Natural killer cell (primary cell): ENCODE measurements at regions of chr2 and their contacts with region 1.

Region 1: GRCh38 chr2:41782306-41783158 is 265.3 kb upstream of the PKDCC start:
- DNase-seq: peak in 1 of 2 donors; percentile 60
- ATAC-seq: peak in 2 of 3 donors; percentile 53 to 69
- H3K4me3 ChIP-seq: no peak overlapping the region
- H3K4me3 Mint-ChIP-seq: no peak overlapping the region
- H3K27ac ChIP-seq: no peak overlapping the region
- H3K27ac Mint-ChIP-seq: no peak overlapping the region
- H3K4me1 ChIP-seq: no peaks in the 10 kb centered on the region
- H3K4me1 Mint-ChIP-seq: no peaks in the 10 kb centered on the region
- H3K27me3 ChIP-seq: no peaks in the 10 kb centered on the region
- H3K27me3 Mint-ChIP-seq: peaks cover 3 to 14% of the 10 kb centered on the region in 2 donors
- CTCF ChIP-seq: peak; percentile 87

Region 2: GRCh38 chr2:39837856-39838453 is 1944.6 kb before region 1 on chr2:
- intact Hi-C with region 1: loop called (anchors 2 kb)
- DNase-seq: peak in 1 of 2 donors; percentile 34
- ATAC-seq: peak in 2 of 3 donors; percentile 34 to 50
- H3K4me3 ChIP-seq: no peak overlapping the region
- H3K4me3 Mint-ChIP-seq: no peak overlapping the region
- H3K27ac ChIP-seq: no peak overlapping the region
- H3K27ac Mint-ChIP-seq: no peak overlapping the region
- H3K4me1 ChIP-seq: peaks cover 12% of the 10 kb centered on the region
- H3K4me1 Mint-ChIP-seq: peaks cover 0 to 6% of the 10 kb centered on the region in 2 donors
- H3K27me3 ChIP-seq: no peaks in the 10 kb centered on the region
- H3K27me3 Mint-ChIP-seq: no peaks in the 10 kb centered on the region
- CTCF ChIP-seq: peak; percentile 31

Region 3: DNA sequence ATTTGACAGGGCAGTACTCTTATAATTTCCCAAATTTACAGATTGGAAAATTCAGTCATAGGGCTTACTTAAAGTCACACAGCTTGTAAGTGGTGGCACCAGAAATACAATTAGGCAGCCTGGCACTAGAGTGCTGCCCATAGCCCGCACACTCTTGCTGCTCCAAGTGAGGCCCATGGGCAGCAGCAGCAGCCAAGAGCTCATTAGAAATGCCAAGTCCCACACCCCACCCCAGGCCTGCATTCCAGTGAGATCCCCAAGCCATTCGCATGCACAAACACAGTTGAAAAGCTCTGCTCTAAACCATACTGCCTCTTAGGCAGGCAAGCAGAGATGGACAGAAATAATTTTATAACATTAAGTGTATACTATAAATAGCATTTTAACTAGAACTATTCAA is 114.0 kb before region 1 on chr2:
- intact Hi-C with region 1: no loop called
- DNase-seq: no peak
- ATAC-seq: no peak
- H3K4me3 ChIP-seq: no peak overlapping the region
- H3K4me3 Mint-ChIP-seq: no peak overlapping the region
- H3K27ac ChIP-seq: no peak overlapping the region
- H3K27ac Mint-ChIP-seq: no peak overlapping the region
- H3K4me1 ChIP-seq: no peaks in the 10 kb centered on the region
- H3K4me1 Mint-ChIP-seq: peaks cover 0 to 5% of the 10 kb centered on the region in 2 donors
- H3K27me3 ChIP-seq: no peaks in the 10 kb centered on the region
- H3K27me3 Mint-ChIP-seq: peaks cover 0 to 9% of the 10 kb centered on the region in 2 donors
- CTCF ChIP-seq: no peak

Region 4: GRCh38 chr2:41764930-41765329 is 17.6 kb before region 1 on chr2:
- intact Hi-C with region 1: no loop called
- DNase-seq: no peak
- ATAC-seq: no peak
- H3K4me3 ChIP-seq: no peak overlapping the region
- H3K4me3 Mint-ChIP-seq: no peak overlapping the region
- H3K27ac ChIP-seq: no peak overlapping the region
- H3K27ac Mint-ChIP-seq: no peak overlapping the region
- H3K4me1 ChIP-seq: no peaks in the 10 kb centered on the region
- H3K4me1 Mint-ChIP-seq: no peaks in the 10 kb centered on the region
- H3K27me3 ChIP-seq: no peaks in the 10 kb centered on the region
- H3K27me3 Mint-ChIP-seq: peaks cover 4 to 7% of the 10 kb centered on the region in 2 donors
- CTCF ChIP-seq: no peak